ENCODE measurements at regions of chr9 and their contacts with region 1.

Region 1: GRCh38 chr9:133375724-133376654 is at the starts of genes STKLD1 and SURF4:
- DNase-seq: peak; percentile 98
- total RNA-seq, gene STKLD1: 0.62 TPM
- total RNA-seq, gene SURF4: 80.2 TPM

Region 2: DNA sequence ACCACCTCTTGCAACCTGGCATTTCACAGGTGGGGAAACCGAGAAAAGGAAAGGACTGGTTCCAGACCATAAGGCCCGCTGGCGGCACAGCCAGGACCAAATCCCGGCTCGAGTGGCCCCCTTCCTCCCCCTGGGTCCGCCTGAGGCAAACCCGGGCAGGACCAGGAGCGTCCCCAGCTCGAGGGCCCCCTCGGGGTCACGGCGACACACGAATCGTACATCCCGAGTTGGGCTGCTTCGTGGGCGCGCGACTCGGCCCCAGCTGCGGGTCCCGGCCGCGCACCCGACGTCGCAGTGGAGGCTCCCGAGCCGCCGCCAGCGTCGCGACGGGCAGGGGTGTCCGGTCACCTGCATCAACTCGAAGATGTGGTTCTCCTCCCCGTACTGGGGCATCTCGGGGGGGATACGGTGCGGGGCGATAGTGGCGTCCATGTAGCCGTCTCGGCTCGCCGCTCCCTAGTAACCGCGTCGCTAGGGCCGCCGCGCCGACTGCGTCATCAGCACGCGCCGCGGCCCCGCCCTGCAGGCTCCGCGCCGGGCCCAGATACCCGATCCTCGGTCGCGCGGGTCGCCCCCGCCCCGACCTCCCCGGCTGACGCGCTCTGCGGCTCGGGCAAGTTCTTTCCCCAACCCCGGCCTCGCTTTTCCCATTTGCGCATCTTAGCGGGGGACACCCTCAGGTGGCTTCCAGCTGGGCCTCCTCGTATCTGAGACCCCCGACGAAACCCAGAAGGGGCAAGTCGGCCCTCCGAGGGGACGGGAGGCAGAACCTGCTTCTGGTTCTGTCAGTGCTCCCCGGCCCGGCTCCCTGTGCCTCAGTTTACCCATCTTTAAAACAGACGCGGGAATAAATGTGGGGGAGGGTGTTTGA is 497.9 kb before region 1 on chr9 and contains the start of gene AK8:
- intact Hi-C with region 1: no loop called
- DNase-seq: peak; percentile 83
- total RNA-seq, gene AK8: 0.13 TPM

Region 3: DNA sequence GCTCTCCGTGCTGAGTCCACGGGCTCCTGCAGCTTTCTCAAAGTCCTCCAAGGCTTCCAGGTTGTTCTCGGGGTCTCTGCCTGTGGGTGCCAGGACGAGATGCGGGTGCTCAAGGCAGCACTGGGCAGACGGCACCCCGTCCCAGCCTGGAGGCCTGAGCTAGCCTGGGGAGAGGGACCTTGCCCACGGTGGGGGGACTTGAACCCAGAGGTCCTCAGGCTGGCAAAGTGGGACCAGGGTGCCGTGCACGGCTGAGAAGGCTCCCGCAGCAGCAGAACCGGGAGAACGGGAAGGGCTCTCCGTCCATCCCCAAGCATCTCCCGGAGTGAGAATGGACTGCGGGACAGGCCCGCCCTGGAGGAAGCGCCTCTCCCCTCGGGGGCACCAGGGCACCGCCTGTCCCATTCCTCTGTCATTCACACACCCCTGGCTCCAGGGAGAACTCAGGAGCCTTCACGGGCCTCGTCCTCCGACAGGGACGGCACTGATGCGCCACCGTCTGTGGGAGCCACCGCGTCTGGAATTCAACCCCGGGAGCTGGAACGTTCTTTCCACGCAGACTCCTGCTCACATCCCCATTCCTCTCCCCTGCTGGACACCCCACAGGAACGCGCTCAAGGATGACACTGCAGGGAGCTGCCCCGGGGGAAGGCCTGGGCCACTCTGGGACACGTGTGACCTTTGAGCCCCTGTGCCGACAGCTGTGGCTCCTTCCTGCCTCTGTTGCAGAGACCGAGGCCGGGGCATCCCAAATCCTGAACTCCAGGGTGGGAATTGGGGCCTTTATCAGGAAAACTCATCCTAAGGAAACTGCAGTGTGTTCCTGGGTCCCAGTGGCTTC is 150.6 kb before region 1 on chr9:
- intact Hi-C with region 1: no loop called
- DNase-seq: peak; percentile 74

Region 4: DNA sequence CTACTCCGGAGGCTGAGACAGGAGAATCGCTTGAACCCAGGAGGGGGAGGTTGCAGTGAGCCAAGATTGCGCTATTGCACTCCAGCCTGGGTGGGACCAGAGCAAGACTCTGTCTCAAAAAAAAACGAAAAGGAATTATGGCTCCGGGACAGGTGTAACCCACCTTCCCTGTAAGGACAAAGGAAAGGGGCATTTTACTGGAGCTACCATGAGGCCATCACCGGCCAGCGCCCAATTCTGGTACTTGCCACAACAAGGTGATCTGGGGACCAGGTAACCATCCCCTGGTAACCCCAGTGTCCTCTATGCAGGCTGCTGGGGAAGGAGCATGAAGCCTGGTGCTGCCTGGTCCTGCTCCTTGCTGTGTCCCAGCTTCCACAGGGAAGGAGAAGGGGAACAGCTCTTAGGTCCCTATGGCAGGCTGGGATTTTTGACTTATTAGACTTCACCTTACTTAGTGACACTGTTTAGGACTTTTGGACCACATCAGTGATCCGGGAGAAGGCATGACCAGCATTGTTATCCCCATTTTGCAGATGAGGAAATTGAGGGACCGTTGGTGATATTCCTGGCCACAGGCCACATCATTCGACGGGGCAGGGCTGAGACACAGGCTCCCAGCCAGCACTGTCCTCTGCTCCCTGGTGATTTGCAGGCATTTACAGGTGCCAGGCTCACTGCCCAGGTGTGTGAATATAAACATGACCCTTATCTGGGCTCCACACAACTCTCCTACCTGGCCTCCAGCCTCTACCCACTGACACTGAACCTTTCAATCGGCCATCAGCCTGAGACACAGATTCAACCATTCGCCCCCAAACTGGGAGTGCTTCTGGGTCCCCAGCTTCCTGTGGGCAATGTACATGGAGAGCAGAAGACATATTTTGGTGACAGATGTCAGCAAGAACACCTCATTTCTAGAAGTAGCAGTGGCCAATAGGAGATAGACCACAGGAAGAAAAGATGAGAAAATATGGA is 74.4 kb before region 1 on chr9:
- intact Hi-C with region 1: no loop called
- DNase-seq: no peak

Region 5: GRCh38 chr9:133335878-133336811 is 39.8 kb before region 1 on chr9 and contains the start of gene SURF6:
- intact Hi-C with region 1: loop called (anchors 1 kb)
- DNase-seq: peak; percentile 95
- total RNA-seq, gene SURF6: 14.2 TPM

Region 6: GRCh38 chr9:133347985-133348717 is 27.8 kb before region 1 on chr9 and contains the starts of genes MED22 and RPL7A:
- intact Hi-C with region 1: loop called (anchors 1 kb)
- DNase-seq: peak; percentile 96
- total RNA-seq, gene MED22: 20.2 TPM
- total RNA-seq, gene RPL7A: 761 TPM

Region 7: GRCh38 chr9:133429641-133430161 is 53.7 kb after region 1 on chr9:
- intact Hi-C with region 1: no loop called
- DNase-seq: no peak

Measured in cardiac septum (tissue), 1 donor.